Heart left ventricle (tissue), 16 donors: ENCODE measurements at regions of chr11 and their contacts with region 1.

Region 1: GRCh38 chr11:122215244-122215992 is 99.4 kb upstream of the BLID start:
- DNase-seq: peak; percentile 70 to 90 (median 79)
- ATAC-seq: peak; percentile 89 to 97 (median 94)
- H3K4me3 ChIP-seq: no peak overlapping the region
- H3K27ac ChIP-seq: peak overlapping the region in 9 of 12 donors; percentile 1 to 47 (median 38)
- H3K4me1 ChIP-seq: peaks cover 0 to 26% (median 10%) of the 10 kb centered on the region in 12 donors
- H3K27me3 ChIP-seq: no peaks in the 10 kb centered on the region
- CTCF ChIP-seq: peak; percentile 85 to 97 (median 94)
- POLR2A ChIP-seq: no peak

Region 2: DNA sequence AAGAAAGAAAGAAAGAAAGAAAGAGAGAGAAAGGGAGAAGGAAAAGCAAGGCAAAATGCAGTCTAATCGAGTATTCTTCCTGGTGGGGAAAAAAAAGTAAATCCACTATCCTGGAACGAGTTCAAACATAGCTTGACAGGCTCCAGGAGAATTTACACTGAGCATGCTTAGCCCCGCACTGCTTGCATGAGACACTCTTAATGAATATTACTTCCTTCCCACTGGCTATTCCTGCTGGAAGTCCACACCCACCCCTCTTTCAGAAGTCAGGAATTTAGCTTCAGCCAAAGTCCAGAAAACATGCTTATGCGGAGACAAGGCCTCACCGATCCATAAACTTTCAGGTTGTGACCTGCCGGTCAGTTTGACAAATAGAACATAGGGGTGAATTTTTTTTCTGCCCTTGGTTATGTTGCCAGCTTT is 152.4 kb after region 1 on chr11:
- intact Hi-C with region 1: loop called in 2 of 10 experiments (anchors 10 kb)
- DNase-seq: peak in 4 of 5 donors; percentile 32 to 48 (median 40)
- ATAC-seq: peak; percentile 71 to 95 (median 84)
- H3K4me3 ChIP-seq: peak overlapping the region in 5 of 12 donors; percentile 2 to 49 (median 23)
- H3K27ac ChIP-seq: peak overlapping the region in 7 of 12 donors; percentile 13 to 74 (median 54)
- H3K4me1 ChIP-seq: peaks cover 0 to 34% (median 13%) of the 10 kb centered on the region in 12 donors
- H3K27me3 ChIP-seq: no peaks in the 10 kb centered on the region
- CTCF ChIP-seq: no peak
- POLR2A ChIP-seq: no peak